Activated CD4-positive, alpha-beta memory T cell treated with anti-CD3 and anti-CD28 coated beads for 36 hours (primary cell): ENCODE measurements at regions of chr3 and their contacts with region 1.

Region 1: GRCh38 chr3:194592798-194593752 is 40.1 kb downstream of the TMEM44 start:
- DNase-seq: no peak
- H3K4me3 Mint-ChIP-seq: no peak overlapping the region
- H3K27ac Mint-ChIP-seq: no peak overlapping the region
- H3K4me1 Mint-ChIP-seq: peaks cover 4% of the 10 kb centered on the region
- H3K27me3 Mint-ChIP-seq: no peaks in the 10 kb centered on the region

Region 2: DNA sequence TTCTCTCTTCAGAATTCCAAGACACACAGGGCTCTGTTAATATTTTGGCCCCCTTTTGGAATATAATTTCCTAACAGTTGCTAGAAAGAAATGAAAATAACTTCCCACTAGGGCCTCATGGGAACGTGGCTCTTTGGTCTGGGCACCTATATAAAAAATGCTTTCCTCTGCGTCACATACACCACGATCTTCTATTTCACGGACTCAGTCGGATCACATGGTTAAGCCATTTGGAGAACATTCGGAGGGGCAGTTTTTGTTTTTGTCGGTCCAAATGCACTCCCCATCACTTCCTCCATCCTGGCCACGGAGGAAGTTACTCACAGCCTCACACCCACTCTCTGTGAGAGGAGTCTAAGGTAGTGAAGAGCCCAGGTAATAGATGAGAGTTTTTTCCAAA is 19.1 kb after region 1 on chr3:
- CTCF ChIA-PET with region 1: interaction called, 11 read pairs
- POLR2A ChIA-PET with region 1: no interaction called
- intact Hi-C with region 1: no loop called
- DNase-seq: peak; percentile 13
- H3K4me3 Mint-ChIP-seq: no peak overlapping the region
- H3K27ac Mint-ChIP-seq: no peak overlapping the region
- H3K4me1 Mint-ChIP-seq: peaks cover 4% of the 10 kb centered on the region
- H3K27me3 Mint-ChIP-seq: no peaks in the 10 kb centered on the region